Natural killer cell (primary cell): ENCODE measurements at regions of chr10 and their contacts with region 1.

Region 1: DNA sequence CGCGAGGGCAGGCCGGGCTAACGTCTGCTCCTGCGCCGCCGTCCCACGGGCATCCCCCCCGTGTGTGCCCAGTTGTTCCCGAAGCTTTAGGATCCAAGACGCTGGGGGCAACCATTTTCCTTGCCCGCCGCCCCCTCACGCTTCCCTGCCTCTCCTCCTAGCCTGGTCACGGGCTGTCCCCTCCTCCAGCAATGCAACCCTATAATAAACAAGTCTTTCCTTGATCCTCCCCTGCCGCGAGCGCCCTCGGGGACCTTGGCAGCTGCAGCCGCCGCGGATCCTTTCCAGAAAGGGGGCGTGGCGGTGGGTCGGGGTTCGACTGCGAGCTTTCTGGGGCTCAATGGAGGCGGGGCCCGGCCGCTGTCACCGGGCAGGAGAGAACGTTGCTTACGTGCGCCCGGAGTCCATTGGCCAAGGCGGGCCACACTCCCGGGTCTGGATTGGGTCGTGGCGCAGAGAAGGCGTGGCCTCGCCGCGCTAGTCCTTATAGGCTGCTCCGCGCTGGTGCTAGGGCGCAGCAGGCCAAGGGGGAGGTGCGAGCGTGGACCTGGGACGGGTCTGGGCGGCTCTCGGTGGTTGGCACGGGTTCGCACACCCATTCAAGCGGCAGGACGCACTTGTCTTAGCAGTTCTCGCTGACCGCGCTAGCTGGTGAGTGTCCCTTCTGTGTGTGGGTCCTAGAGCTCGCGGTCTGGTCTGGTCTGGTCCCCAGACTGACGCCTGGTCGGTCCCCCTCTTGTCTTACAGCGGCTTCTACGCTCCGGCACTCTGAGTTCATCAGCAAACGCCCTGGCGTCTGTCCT is at the start of gene DDIT4:
- DNase-seq: peak; percentile 98
- ATAC-seq: peak; percentile 90 to 98 (median 90)
- H3K4me3 ChIP-seq: peak within 1 kb of the TSS; percentile 90
- H3K4me3 Mint-ChIP-seq: peak within 1 kb of the TSS; percentile 99
- H3K27ac ChIP-seq: peak within 1 kb of the TSS; percentile 82
- H3K27ac Mint-ChIP-seq: peak within 1 kb of the TSS; percentile 91 to 94
- H3K4me1 ChIP-seq: peaks cover 48% of the 10 kb centered on the region
- H3K4me1 Mint-ChIP-seq: peaks cover 39 to 64% of the 10 kb centered on the region in 2 donors
- H3K27me3 ChIP-seq: no peaks in the 10 kb centered on the region
- H3K27me3 Mint-ChIP-seq: no peaks in the 10 kb centered on the region
- CTCF ChIP-seq: no peak
- total RNA-seq, gene DDIT4: 174 to 232 (median 200) TPM

Region 2: GRCh38 chr10:71623098-71623985 is 650.3 kb before region 1 on chr10:
- intact Hi-C with region 1: no loop called
- DNase-seq: peak in 1 of 2 donors; percentile 21
- ATAC-seq: no peak
- H3K4me3 ChIP-seq: no peak overlapping the region
- H3K4me3 Mint-ChIP-seq: no peak overlapping the region
- H3K27ac ChIP-seq: no peak overlapping the region
- H3K27ac Mint-ChIP-seq: no peak overlapping the region
- H3K4me1 ChIP-seq: no peaks in the 10 kb centered on the region
- H3K4me1 Mint-ChIP-seq: no peaks in the 10 kb centered on the region
- H3K27me3 ChIP-seq: no peaks in the 10 kb centered on the region
- H3K27me3 Mint-ChIP-seq: peaks cover 0 to 5% of the 10 kb centered on the region in 2 donors
- CTCF ChIP-seq: no peak

Region 3: DNA sequence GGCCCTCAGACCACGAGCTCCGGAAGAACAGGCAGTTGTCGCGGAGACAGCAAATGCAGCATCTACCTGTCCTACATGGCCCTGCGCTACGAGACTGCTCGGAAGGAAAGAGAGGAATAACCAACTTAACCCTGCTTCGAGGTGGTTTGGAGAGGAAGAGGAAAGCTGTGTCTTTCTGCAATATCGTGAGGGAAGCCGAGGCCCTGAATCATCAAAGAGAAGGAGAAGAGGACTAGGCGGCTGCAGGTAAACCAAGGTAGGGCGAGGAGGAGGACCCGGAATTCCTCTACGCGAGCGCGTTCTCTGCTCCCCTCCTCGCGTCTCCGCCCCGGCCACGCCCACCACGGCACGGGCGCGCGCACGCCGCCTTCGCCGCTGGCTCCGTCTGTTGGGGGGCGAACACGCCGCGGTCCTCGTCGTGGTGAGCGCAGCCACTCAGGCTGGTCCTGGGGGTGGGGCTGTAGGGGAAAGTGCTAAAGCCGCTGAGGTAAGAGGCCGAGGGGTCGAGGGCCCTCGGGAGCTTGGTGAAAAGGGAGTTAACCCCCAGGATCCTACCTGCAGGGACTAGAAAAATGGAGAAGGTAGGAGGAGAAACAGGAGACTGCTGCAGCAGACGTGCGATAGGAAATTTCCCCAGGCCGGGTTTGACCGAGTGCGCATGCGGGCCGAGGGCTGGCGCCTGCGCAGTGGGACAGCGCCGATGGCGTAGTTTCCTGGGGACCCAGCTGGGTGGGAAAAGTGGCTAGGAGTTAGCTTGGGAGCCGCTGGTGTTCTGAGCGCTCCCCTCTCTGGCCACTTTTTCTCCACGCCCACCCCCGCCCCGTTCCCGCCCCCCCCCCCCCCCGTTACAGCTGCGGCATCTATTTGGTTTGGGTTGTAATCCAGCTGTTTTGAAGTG is 57.7 kb before region 1 on chr10 and contains the starts of genes ANAPC16 and ASCC1:
- intact Hi-C with region 1: loop called (anchors 2 kb)
- DNase-seq: peak; percentile 95 to 96
- ATAC-seq: peak; percentile 93 to 97 (median 93)
- H3K4me3 ChIP-seq: peak within 1 kb of the TSS; percentile 66
- H3K4me3 Mint-ChIP-seq: peak within 1 kb of the TSS; percentile 97
- H3K27ac ChIP-seq: peak within 1 kb of the TSS; percentile 93
- H3K27ac Mint-ChIP-seq: peak within 1 kb of the TSS; percentile 98 to 100
- H3K4me1 ChIP-seq: peaks cover 28% of the 10 kb centered on the region
- H3K4me1 Mint-ChIP-seq: peaks cover 20 to 45% of the 10 kb centered on the region in 2 donors
- H3K27me3 ChIP-seq: no peaks in the 10 kb centered on the region
- H3K27me3 Mint-ChIP-seq: no peaks in the 10 kb centered on the region
- CTCF ChIP-seq: no peak
- total RNA-seq, gene ANAPC16: 70.9 to 77.0 (median 71.0) TPM
- total RNA-seq, gene ASCC1: 26.0 to 35.2 (median 29.3) TPM

Region 4: GRCh38 chr10:72248468-72249151 is 25.0 kb before region 1 on chr10:
- intact Hi-C with region 1: loop called (anchors 1 kb)
- DNase-seq: peak; percentile 58 to 88
- ATAC-seq: peak; percentile 90 to 95 (median 94)
- H3K4me3 ChIP-seq: peak overlapping the region; percentile 26
- H3K4me3 Mint-ChIP-seq: peak overlapping the region; percentile 88
- H3K27ac ChIP-seq: peak overlapping the region; percentile 88
- H3K27ac Mint-ChIP-seq: peak overlapping the region; percentile 88 to 89
- H3K4me1 ChIP-seq: peaks cover 97% of the 10 kb centered on the region
- H3K4me1 Mint-ChIP-seq: peaks cover 69 to 87% of the 10 kb centered on the region in 2 donors
- H3K27me3 ChIP-seq: no peaks in the 10 kb centered on the region
- H3K27me3 Mint-ChIP-seq: no peaks in the 10 kb centered on the region
- CTCF ChIP-seq: no peak

Region 5: DNA sequence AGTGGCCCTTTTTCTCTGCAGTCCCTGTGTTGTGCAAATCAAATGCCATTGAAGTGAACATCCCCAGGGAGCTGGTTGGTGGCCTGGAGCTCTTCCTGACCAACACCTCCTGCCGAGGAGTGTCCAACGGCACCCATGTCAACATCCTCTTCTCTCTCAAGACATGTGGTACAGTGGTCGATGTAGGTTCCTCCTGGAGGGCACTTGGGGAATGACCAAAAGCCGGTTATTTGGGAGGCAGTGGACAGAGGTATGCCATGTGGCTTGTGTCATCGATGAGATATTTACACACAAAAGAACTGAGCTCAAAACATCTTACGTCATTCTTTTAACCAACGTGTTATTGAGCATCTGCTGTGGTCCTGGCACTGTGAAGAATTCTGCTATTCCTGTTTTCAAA is 639.7 kb after region 1 on chr10:
- intact Hi-C with region 1: no loop called
- DNase-seq: no peak
- ATAC-seq: no peak
- H3K4me3 ChIP-seq: no peak overlapping the region
- H3K4me3 Mint-ChIP-seq: no peak overlapping the region
- H3K27ac ChIP-seq: no peak overlapping the region
- H3K27ac Mint-ChIP-seq: no peak overlapping the region
- H3K4me1 ChIP-seq: no peaks in the 10 kb centered on the region
- H3K4me1 Mint-ChIP-seq: no peaks in the 10 kb centered on the region
- H3K27me3 ChIP-seq: no peaks in the 10 kb centered on the region
- H3K27me3 Mint-ChIP-seq: peaks cover 3 to 10% of the 10 kb centered on the region in 2 donors
- CTCF ChIP-seq: no peak